ENCODE measurements at regions of chr17 and their contacts with region 1.

Region 1: DNA sequence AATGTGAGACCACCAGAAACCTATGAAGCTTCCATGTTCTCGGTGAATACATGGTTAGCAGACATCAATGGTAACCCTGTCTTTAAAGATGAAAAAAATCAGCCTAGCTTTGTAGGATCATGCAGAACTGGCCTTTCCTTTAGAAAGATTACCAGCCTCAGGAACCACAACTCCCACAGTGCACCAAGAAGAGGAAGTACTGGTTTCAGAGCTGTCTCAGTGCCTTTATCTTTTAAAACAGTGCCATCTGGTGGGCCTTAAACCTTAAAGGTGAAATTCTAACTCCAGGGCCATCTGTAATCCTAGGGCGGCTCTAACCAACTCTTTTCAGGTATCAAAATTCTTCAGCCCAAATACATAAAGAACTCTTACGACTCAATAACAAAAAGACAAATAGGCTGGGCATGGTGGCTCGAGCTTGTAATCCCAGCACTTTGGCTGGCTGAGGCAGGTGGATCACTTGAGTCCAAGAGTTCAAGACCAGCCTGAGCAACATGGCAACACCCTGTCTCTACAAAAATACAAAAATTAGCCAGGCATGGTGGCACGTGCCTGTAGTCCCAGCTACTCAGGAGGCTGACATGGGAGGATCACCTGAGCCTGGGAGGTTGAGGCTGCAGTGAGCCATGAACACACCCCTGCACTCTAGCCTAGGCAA is 5.4 kb downstream of the ATPAF2 start:
- DNase-seq: peak; percentile 93
- ATAC-seq: peak; percentile 80
- H3K4me3 ChIP-seq: no peak overlapping the region
- H3K27ac ChIP-seq: no peak overlapping the region
- H3K4me1 ChIP-seq: peaks cover 31% of the 10 kb centered on the region
- H3K27me3 ChIP-seq: no peaks in the 10 kb centered on the region
- CTCF ChIP-seq: peak; percentile 87

Region 2: DNA sequence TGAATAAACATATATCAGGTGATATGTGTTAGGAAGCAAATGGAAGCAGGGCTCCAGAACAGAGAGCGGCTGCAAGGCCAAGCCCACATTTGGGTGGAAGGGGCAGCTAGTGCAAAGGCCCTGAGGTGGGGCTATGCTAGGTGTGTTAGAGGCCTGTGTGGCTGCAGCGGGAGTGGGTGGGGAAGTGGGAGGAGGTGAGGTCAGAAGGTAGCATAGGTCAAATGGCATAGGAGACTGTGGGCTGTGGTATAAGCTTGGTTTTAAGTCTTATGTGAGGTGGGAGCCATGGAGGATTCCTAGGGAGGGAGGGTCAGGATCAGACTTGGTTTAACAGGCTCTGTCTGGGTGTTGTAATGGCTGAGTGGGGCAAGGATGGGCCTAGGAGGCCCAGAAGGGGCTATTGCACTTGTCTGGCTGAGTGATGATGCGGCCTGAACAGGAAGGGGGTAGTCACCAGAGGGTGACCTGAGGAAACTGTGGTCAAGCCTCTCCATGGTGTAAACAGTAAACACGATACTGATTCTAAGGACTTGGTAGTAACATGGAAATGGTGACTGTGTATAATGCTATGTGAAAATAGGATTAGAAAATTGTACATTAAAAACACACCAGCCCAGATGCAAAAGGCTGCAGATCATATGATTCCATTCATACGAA is 321.2 kb before region 1 on chr17:
- CTCF ChIA-PET with region 1: no interaction called
- POLR2A ChIA-PET with region 1: no interaction called
- intact Hi-C with region 1: no loop called
- DNase-seq: peak; percentile 48
- ATAC-seq: no peak; the same call in 1 of the 2 replicates
- H3K4me3 ChIP-seq: no peak overlapping the region
- H3K27ac ChIP-seq: peak overlapping the region; percentile 25
- H3K4me1 ChIP-seq: peaks cover 34% of the 10 kb centered on the region
- H3K27me3 ChIP-seq: no peaks in the 10 kb centered on the region
- CTCF ChIP-seq: no peak

Region 3: DNA sequence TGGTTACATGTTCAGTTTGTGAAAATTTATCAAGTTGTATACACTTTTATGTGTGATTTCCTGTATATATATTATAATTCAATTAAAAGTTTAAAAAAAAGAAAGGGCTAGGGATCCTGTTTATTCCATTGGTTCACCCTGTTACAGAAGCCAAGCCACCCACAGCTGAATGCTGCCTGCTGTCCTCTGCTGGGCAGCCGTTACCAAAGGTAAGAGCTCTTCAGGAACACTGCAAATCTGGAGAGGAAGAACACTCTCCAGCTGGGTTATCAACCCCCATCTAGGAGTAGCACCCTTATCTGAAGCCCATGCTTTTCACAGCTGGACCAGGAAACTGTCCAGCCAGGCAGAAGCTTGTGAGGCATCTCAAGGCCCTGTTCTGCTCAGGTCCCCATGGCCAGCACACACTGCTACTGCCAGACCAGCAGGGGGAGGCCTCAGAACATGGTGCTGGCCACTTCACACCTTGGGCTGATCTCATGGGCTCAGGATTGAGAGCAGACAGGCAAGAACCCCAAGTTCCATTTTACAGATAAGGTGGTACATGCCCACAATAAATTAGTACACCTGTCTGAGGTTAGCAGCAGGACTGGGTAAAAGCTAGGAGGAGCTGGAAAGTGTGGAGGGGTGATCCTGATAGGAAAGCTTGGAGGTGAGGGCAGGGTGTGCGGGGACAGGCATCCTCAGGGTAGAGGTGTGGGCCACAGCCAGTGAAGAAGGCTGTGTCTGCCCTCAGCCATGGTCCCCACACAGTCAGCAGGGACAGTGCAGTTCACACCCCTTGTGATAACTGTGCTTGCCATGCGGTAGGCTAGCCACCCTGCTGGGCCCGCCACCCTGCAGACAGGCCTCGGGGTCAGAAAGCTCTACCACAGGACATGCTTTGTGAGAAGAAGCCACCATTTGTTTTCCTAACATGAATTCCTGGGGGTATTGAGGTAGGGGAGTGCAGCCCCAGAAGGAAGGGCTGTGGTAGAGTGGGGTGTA is 142.5 kb before region 1 on chr17:
- CTCF ChIA-PET with region 1: no interaction called
- POLR2A ChIA-PET with region 1: no interaction called
- intact Hi-C with region 1: loop called (anchors 1 kb)
- DNase-seq: peak; percentile 73
- ATAC-seq: peak; percentile 99
- H3K4me3 ChIP-seq: no peak overlapping the region
- H3K27ac ChIP-seq: no peak overlapping the region
- H3K4me1 ChIP-seq: no peaks in the 10 kb centered on the region
- H3K27me3 ChIP-seq: no peaks in the 10 kb centered on the region
- CTCF ChIP-seq: peak; percentile 97

Region 4: GRCh38 chr17:17959520-17960361 is 73.8 kb before region 1 on chr17:
- CTCF ChIA-PET with region 1: no interaction called
- POLR2A ChIA-PET with region 1: interaction called, 26 read pairs
- intact Hi-C with region 1: no loop called
- DNase-seq: no peak
- ATAC-seq: no peak
- H3K4me3 ChIP-seq: peak overlapping the region; percentile 0; the same call in 1 of the 2 replicates
- H3K27ac ChIP-seq: peak overlapping the region; percentile 97
- H3K4me1 ChIP-seq: peaks cover 41% of the 10 kb centered on the region
- H3K27me3 ChIP-seq: no peaks in the 10 kb centered on the region
- CTCF ChIP-seq: no peak

Region 5: GRCh38 chr17:17972126-17972951 is 61.2 kb before region 1 on chr17 and contains the starts of genes DRC3 and TOM1L2:
- CTCF ChIA-PET with region 1: interaction called, 4 read pairs
- POLR2A ChIA-PET with region 1: no interaction called
- intact Hi-C with region 1: loop called (anchors 1 kb)
- DNase-seq: peak; percentile 100
- ATAC-seq: peak; percentile 90
- H3K4me3 ChIP-seq: peak within 1 kb of the TSS; percentile 80
- H3K27ac ChIP-seq: peak within 1 kb of the TSS; percentile 30
- H3K4me1 ChIP-seq: peaks cover 13% of the 10 kb centered on the region
- H3K27me3 ChIP-seq: no peaks in the 10 kb centered on the region
- CTCF ChIP-seq: no peak
- total RNA-seq, gene DRC3: 1.9 and 2.2 TPM in 2 replicates
- total RNA-seq, gene TOM1L2: 53.3 and 77.1 TPM in 2 replicates

Region 6: GRCh38 chr17:17994271-17995069 is 39.1 kb before region 1 on chr17:
- CTCF ChIA-PET with region 1: no interaction called
- POLR2A ChIA-PET with region 1: no interaction called
- intact Hi-C with region 1: loop called (anchors 5 kb)
- DNase-seq: peak; percentile 35
- ATAC-seq: peak; percentile 7; the same call in 1 of the 2 replicates
- H3K4me3 ChIP-seq: no peak overlapping the region
- H3K27ac ChIP-seq: no peak overlapping the region
- H3K4me1 ChIP-seq: peaks cover 18% of the 10 kb centered on the region
- H3K27me3 ChIP-seq: no peaks in the 10 kb centered on the region
- CTCF ChIP-seq: peak; percentile 57

Measured in PC-3 (cell line).